Activated CD8-positive, alpha-beta memory T cell treated with anti-CD3 and anti-CD28 coated beads, Interleukin-2, amount 10 ng/mL, durations not matched to agents 7 days and 5 days (primary cell): ENCODE measurements at regions of chr9 and their contacts with region 1.

Region 1: DNA sequence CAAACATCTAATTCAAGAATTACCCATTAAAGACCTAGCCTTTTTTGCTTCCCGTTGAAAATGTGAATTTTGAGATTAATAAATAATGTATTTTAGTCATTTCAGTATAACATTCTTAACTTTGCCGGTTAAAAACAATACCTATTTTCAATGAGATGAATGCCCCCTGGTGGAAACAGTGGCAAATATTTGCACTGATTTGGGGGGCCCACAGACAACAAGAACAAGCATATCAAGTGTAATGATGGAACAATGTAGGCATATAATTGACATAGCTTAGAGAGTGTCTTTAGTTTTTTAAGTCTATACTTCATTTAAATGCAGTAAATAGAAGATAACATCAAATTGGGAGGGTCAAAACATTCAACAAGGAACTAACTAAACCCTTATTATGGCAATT is 111.9 kb downstream of the NTRK2 start:
- DNase-seq: peak; percentile 49
- ATAC-seq: no peak
- H3K4me3 Mint-ChIP-seq: no peak overlapping the region
- H3K27ac Mint-ChIP-seq: no peak overlapping the region
- H3K4me1 Mint-ChIP-seq: no peaks in the 10 kb centered on the region
- H3K27me3 Mint-ChIP-seq: peaks cover 19% of the 10 kb centered on the region

Region 2: GRCh38 chr9:84697509-84698114 is 83.8 kb before region 1 on chr9:
- CTCF ChIA-PET with region 1: interaction called, 72 read pairs
- DNase-seq: peak; percentile 68
- ATAC-seq: peak; percentile 53
- H3K4me3 Mint-ChIP-seq: no peak overlapping the region
- H3K27ac Mint-ChIP-seq: no peak overlapping the region
- H3K4me1 Mint-ChIP-seq: peaks cover 3% of the 10 kb centered on the region
- H3K27me3 Mint-ChIP-seq: peaks cover 27% of the 10 kb centered on the region